Activated CD4-positive, alpha-beta memory T cell treated with anti-CD3 and anti-CD28 coated beads for 36 hours (primary cell): ENCODE measurements at regions of chr2 and their contacts with region 1.

Region 1: DNA sequence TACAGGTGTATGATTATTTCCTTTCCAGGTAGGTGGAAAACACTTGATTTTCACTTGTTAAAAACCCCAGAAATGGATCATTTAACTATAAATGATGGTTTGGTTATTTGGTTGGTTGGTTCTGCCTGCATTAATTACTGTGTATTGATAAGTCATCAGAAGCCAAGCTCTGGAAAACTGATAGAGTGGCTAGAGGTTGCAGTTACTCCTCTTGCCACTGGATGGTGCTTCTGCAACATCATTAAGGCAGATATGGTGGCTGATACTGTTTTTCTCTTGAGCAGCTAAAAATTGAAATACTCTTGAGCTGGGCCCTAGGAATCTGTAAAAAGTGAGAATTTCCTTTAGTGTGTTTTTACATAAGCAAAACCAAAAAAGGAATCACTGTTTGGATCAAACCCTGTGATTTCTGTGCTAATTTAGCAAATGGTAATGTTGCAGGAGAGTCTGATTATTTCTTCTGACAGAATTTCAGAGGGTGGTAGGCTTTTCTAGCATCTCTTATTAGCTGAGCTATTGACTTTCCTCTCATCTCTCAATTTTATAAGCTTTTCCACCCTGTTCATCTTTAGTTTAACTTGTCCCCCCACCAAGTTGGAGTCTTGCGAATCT is 54.3 kb downstream of the RAB10 start:
- DNase-seq: peak; percentile 27
- H3K4me3 Mint-ChIP-seq: no peak overlapping the region
- H3K27ac Mint-ChIP-seq: no peak overlapping the region
- H3K4me1 Mint-ChIP-seq: peaks cover 58% of the 10 kb centered on the region
- H3K27me3 Mint-ChIP-seq: no peaks in the 10 kb centered on the region

Region 2: GRCh38 chr2:25991965-25992364 is 96.2 kb before region 1 on chr2:
- CTCF ChIA-PET with region 1: interaction called, 17 read pairs
- POLR2A ChIA-PET with region 1: interaction called, 3 read pairs
- intact Hi-C with region 1: no loop called
- DNase-seq: no peak
- H3K4me3 Mint-ChIP-seq: no peak overlapping the region
- H3K27ac Mint-ChIP-seq: no peak overlapping the region
- H3K4me1 Mint-ChIP-seq: peaks cover 2% of the 10 kb centered on the region
- H3K27me3 Mint-ChIP-seq: no peaks in the 10 kb centered on the region

Region 3: GRCh38 chr2:26068602-26069298 is 19.4 kb before region 1 on chr2:
- CTCF ChIA-PET with region 1: interaction called, 20 read pairs
- POLR2A ChIA-PET with region 1: interaction called, 5 read pairs
- intact Hi-C with region 1: loop called (anchors 1 kb)
- DNase-seq: peak; percentile 76
- H3K4me3 Mint-ChIP-seq: peak overlapping the region; percentile 69
- H3K27ac Mint-ChIP-seq: peak overlapping the region; percentile 96
- H3K4me1 Mint-ChIP-seq: peaks cover 57% of the 10 kb centered on the region
- H3K27me3 Mint-ChIP-seq: no peaks in the 10 kb centered on the region

Region 4: DNA sequence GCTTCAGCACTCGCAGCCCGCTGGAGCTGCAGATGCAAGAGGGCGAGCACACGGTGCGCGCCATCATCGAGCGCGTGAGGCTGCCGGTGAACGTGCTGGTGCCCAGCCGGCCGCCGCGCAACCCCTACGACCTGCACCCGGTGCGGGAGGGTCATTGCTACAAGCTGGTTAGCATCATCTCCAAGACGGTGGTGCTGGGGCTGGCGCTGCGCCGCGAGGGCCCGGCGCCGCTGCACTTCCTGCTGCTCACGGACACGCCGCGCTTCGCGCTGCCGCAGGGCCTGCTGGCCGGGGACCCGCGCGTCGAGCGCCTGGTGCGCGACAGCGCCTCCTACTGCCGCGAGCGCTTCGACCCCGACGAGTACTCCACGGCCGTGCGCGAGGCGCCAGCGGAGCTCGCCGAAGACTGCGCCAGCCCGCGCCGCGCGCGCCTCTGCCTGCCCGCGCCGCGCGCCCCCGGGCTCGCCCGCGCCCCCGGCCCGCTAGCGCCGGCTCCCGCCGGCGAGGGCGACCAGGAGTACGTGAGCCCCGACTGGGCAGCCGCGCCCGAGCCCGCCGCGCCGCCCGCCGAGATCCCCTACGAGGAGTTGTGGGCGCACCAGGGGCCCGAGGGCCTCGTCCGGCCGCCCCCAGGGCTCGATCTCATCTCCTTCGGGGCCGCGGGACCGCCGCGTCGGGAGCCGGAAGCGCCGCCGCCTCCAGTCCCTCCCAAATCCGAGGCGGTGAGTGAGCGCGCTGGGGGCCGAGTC is 96.6 kb after region 1 on chr2:
- CTCF ChIA-PET with region 1: interaction called, 11 read pairs
- POLR2A ChIA-PET with region 1: no interaction called
- intact Hi-C with region 1: no loop called
- DNase-seq: peak; percentile 89
- H3K4me3 Mint-ChIP-seq: peak overlapping the region; percentile 72
- H3K27ac Mint-ChIP-seq: no peak overlapping the region
- H3K4me1 Mint-ChIP-seq: peaks cover 14% of the 10 kb centered on the region
- H3K27me3 Mint-ChIP-seq: peaks cover 13% of the 10 kb centered on the region